B cell (primary cell): ENCODE measurements at regions of chr5 and their contacts with region 1.

Region 1: GRCh38 chr5:76175051-76175666 is 92.0 kb downstream of the SV2C start:
- DNase-seq: peak; percentile 69
- ATAC-seq: peak; percentile 36
- H3K4me3 ChIP-seq: no peak overlapping the region
- H3K4me3 Mint-ChIP-seq: no peak overlapping the region
- H3K27ac ChIP-seq: no peak overlapping the region
- H3K27ac Mint-ChIP-seq: no peak overlapping the region
- H3K4me1 ChIP-seq: peaks cover 14 to 18% of the 10 kb centered on the region in 2 donors
- H3K4me1 Mint-ChIP-seq: peaks cover 15% of the 10 kb centered on the region
- H3K27me3 ChIP-seq: no peaks in the 10 kb centered on the region
- H3K27me3 Mint-ChIP-seq: no peaks in the 10 kb centered on the region
- CTCF ChIP-seq: peak; percentile 94

Region 2: DNA sequence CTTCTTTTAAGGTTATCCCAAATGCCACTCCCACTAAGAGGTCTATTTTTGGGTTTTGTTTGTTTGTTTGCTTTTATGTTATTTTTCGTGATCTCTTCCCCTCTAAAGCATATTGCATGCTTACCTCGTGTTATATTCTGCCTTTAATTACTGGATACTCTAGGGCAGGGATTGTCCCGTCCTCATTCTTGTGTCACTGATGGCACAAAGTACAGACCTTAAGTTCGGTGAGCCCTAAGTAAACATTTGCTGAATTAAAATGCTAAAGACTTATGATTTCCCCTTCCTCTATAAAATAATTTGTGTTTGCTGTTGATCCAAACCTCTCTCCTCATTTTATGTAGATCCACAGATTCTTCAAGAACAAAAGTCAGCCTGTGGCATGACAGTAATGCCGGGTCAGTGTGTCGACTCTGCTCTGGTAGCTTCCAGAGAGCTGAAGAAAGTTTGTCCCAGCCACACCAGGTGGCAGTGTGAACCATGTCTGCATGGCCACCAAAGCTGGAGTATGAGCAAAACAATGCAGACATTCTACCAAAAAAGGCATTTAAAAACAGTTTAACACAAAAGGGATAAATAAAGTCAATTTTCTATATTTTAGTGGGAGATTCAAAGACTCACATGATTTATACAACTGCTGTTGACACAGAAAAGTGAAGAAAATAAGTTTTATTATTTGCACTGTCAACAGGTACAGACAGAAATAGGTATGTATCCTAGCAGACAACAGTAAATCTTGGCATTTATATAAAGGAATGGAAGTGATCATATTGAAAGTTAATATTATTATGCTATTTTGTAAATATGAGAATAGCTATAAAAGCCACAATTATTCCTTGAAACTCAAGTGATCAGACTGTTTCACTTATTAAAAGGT is 440.0 kb before region 1 on chr5:
- CTCF ChIA-PET with region 1: interaction called, 25 read pairs
- POLR2A ChIA-PET with region 1: no interaction called
- intact Hi-C with region 1: no loop called
- DNase-seq: peak; percentile 62
- ATAC-seq: no peak
- H3K4me3 ChIP-seq: no peak overlapping the region
- H3K4me3 Mint-ChIP-seq: no peak overlapping the region
- H3K27ac ChIP-seq: no peak overlapping the region
- H3K27ac Mint-ChIP-seq: no peak overlapping the region
- H3K4me1 ChIP-seq: no peaks in the 10 kb centered on the region
- H3K4me1 Mint-ChIP-seq: no peaks in the 10 kb centered on the region
- H3K27me3 ChIP-seq: no peaks in the 10 kb centered on the region
- H3K27me3 Mint-ChIP-seq: peaks cover 13% of the 10 kb centered on the region
- CTCF ChIP-seq: peak; percentile 69

Region 3: DNA sequence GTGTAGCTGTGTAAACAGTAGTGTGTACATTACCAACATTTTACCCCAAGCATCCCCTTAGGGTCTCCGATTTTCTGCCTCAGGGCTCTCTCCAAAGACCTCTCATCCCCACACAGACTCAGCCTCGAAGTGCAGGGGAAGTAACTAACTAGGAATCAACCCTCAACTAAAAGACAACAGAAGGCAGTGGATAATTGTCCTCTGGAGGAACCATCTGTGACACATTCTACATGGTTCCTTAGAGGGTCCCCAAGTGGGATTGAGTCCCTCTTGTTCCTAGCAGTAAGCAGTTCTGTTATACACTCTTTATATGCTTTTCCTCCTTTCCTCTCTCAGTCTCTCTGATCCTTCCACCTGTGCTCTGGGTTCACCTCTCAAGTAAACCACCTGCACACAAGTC is 65.2 kb after region 1 on chr5:
- CTCF ChIA-PET with region 1: no interaction called
- POLR2A ChIA-PET with region 1: no interaction called
- intact Hi-C with region 1: no loop called
- DNase-seq: no peak
- ATAC-seq: no peak
- H3K4me3 ChIP-seq: no peak overlapping the region
- H3K4me3 Mint-ChIP-seq: no peak overlapping the region
- H3K27ac ChIP-seq: no peak overlapping the region
- H3K27ac Mint-ChIP-seq: no peak overlapping the region
- H3K4me1 ChIP-seq: no peaks in the 10 kb centered on the region
- H3K4me1 Mint-ChIP-seq: no peaks in the 10 kb centered on the region
- H3K27me3 ChIP-seq: peaks cover 0 to 3% (median 0%) of the 10 kb centered on the region in 4 experiments
- H3K27me3 Mint-ChIP-seq: peaks cover 21% of the 10 kb centered on the region
- CTCF ChIP-seq: no peak